ENCODE measurements at regions of chr3 and their contacts with region 1.

Region 1: DNA sequence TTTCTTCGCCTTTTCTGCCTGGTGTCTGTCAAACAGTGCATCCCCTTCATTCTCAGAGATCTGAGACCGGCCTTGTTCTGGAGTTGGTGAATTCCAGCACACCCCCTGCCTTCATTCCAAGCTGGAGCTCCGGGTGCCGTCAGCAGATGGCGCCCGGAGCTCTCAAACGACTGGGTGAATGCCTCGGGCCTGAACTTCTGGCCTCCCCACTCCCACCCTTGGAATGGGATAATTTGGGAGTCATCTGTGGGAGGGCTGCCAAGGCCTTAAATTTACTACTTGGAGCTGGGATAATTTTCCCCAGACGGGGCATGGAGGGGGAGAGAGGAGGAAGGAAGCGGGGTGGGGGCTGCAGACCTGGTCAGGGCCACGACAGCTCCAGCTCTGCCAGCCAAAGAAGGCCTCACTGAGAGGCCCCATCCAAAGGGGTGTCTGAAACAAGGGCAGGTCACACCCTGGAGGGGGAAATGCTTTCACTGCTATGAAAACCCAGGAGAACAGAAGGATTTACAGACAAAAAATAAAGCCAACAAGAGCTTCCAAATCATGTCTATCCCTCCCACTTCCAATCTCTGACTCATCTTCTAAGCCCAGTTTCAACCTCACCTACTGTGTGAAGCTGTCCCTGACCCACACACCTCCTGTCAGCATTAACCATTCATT is 187.9 kb downstream of the OPA1 start:
- DNase-seq: peak; percentile 64 to 88
- ATAC-seq: peak; percentile 89 to 94
- H3K4me3 ChIP-seq: no peak overlapping the region
- H3K27ac ChIP-seq: peak overlapping the region; percentile 69 to 82
- H3K4me1 ChIP-seq: peaks cover 44% of the 10 kb centered on the region
- CTCF ChIP-seq: peak; percentile 78
- EP300 ChIP-seq: no peak
- POLR2A ChIP-seq: no peak
- RAD21 ChIP-seq: peak; percentile 82 to 91

Region 2: GRCh38 chr3:193743702-193744047 is 37.3 kb before region 1 on chr3:
- CTCF ChIA-PET with region 1: no interaction called
- POLR2A ChIA-PET with region 1: no interaction called
- DNase-seq: peak in 1 of 2 experiments; percentile 19
- ATAC-seq: peak; percentile 50 to 56; a peak in 3 of 6 replicates
- H3K4me3 ChIP-seq: no peak overlapping the region
- H3K27ac ChIP-seq: peak overlapping the region; percentile 65 to 74
- H3K4me1 ChIP-seq: peaks cover 23% of the 10 kb centered on the region
- CTCF ChIP-seq: no peak
- EP300 ChIP-seq: no peak
- POLR2A ChIP-seq: no peak
- RAD21 ChIP-seq: no peak

Region 3: DNA sequence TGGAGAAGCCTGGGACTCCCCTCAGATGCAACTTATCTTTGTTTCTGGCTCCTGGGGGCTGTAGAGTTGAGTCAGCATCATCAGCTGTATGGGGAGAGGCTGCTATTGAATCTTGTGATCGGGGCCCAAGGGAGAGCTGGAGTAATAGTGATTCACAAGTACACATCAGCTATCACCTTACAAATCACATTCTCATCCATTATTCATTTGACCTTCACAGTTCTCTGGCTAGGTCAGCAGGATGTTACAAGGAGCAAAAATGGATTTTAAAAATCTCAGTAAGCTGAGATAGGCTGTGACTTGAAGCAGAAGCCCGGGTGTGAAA is 12.9 kb before region 1 on chr3:
- CTCF ChIA-PET with region 1: interaction called, 30 read pairs
- POLR2A ChIA-PET with region 1: no interaction called
- DNase-seq: no peak
- ATAC-seq: no peak
- H3K4me3 ChIP-seq: no peak overlapping the region
- H3K27ac ChIP-seq: no peak overlapping the region
- H3K4me1 ChIP-seq: no peaks in the 10 kb centered on the region
- CTCF ChIP-seq: no peak
- EP300 ChIP-seq: no peak
- POLR2A ChIP-seq: no peak
- RAD21 ChIP-seq: no peak

Region 4: DNA sequence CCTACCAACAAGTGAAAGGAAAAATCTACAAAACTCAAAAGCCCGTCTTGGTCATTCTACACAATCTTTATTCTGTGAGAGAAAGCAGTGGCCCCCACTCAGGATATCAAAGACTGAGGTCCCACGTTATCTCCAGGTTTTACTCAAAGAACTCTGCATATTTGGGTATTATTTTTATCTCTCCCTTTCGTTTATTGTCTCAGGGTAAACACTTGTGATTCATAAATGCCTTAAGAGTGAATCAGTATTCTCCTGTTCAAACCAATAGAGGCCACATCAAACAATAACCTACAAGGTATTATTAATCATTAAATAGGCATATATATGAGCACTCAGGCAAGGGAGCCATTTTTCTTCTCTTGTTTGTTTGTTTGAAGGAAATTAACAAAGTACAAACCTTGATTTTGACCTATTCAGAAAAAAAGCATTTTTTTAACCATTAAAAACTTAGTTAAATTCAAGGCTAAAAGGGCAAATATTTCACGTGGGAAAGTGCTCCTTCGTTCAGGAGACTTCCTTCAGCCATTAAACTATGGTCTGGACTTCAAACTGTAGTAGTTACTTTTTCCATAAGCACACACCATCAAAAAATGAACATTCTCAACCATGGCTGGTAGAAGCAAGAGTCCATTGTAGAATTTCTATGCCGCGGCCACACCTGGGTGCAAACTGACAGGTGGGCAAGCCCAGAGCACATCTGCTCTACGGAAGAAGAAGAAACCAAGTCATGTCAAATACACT is 341.1 kb after region 1 on chr3:
- CTCF ChIA-PET with region 1: no interaction called
- POLR2A ChIA-PET with region 1: interaction called, 11 read pairs
- DNase-seq: peak; percentile 49 to 75
- ATAC-seq: peak; percentile 77 to 92
- H3K4me3 ChIP-seq: no peak overlapping the region
- H3K27ac ChIP-seq: peak overlapping the region; percentile 54 to 79; a peak in 5 of 6 replicates
- H3K4me1 ChIP-seq: peaks cover 24% of the 10 kb centered on the region
- CTCF ChIP-seq: no peak
- EP300 ChIP-seq: no peak; a peak in 1 of 5 replicates
- POLR2A ChIP-seq: no peak
- RAD21 ChIP-seq: no peak

Region 5: GRCh38 chr3:194141415-194142155 is 360.6 kb after region 1 on chr3:
- CTCF ChIA-PET with region 1: interaction called, 54 read pairs
- POLR2A ChIA-PET with region 1: interaction called, 30 read pairs
- DNase-seq: peak; percentile 66 to 83
- ATAC-seq: peak; percentile 53 to 59
- H3K4me3 ChIP-seq: peak overlapping the region; percentile 47
- H3K27ac ChIP-seq: peak overlapping the region; percentile 99 to 100
- H3K4me1 ChIP-seq: peaks cover 41% of the 10 kb centered on the region
- CTCF ChIP-seq: no peak
- EP300 ChIP-seq: peak; percentile 16 to 56; a peak in 2 of 5 replicates
- POLR2A ChIP-seq: no peak; the same call in 1 of the 2 replicates
- RAD21 ChIP-seq: 0 out of 5 replicates have a peak, but pooled peaks of 1 of the 2 experiments have one; percentile 18

Region 6: DNA sequence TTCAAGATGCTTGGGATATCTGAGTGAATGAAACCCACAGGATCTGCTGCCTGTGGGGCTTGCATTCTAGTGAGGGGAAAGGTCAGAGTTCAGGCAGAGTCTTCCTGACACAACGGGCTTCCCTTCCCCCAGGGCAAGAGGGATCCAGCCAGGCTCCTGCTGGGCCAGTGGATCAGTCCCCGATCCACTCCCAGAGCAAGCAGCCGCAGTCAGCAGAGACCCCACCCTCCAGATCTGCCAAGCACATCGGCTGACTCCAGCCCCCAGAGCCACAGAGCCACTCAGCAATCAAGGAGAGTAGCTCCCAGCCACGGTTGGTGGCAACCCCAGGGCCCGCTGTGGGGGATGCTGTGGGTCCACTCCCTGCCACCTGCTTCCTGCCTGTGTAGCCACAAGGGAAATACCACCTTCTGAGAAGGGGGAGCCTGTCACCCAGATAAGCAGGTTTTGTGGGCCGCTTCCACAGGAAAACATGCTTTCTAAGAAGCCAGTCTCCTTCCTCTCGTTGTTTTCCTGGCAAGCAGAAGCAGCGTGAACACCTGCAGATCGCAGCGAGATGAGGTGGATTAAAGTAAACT is 525.3 kb after region 1 on chr3:
- CTCF ChIA-PET with region 1: interaction called, 10 read pairs
- POLR2A ChIA-PET with region 1: no interaction called
- DNase-seq: no peak
- ATAC-seq: no peak
- H3K4me3 ChIP-seq: no peak overlapping the region
- H3K27ac ChIP-seq: no peak overlapping the region
- H3K4me1 ChIP-seq: peaks cover 13% of the 10 kb centered on the region
- CTCF ChIP-seq: no peak
- EP300 ChIP-seq: no peak
- POLR2A ChIP-seq: no peak
- RAD21 ChIP-seq: no peak

Region 7: GRCh38 chr3:194333212-194333980 is 552.5 kb after region 1 on chr3:
- CTCF ChIA-PET with region 1: interaction called, 11 read pairs
- POLR2A ChIA-PET with region 1: no interaction called
- DNase-seq: peak; percentile 47 to 82
- ATAC-seq: peak; percentile 87 to 97
- H3K4me3 ChIP-seq: peak overlapping the region; percentile 45
- H3K27ac ChIP-seq: peak overlapping the region; percentile 69 to 93
- H3K4me1 ChIP-seq: peaks cover 25% of the 10 kb centered on the region
- CTCF ChIP-seq: peak; percentile 86
- EP300 ChIP-seq: no peak
- POLR2A ChIP-seq: no peak; the same call in 1 of the 2 replicates
- RAD21 ChIP-seq: peak; percentile 90 to 95